ENCODE measurements at regions of chr7 and their contacts with region 1.

Region 1: GRCh38 chr7:42911454-42912447 is at the start of gene C7orf25:
- DNase-seq: peak; percentile 88 to 99
- H3K4me3 ChIP-seq: peak within 1 kb of the TSS; percentile 85
- H3K27ac ChIP-seq: peak within 1 kb of the TSS; percentile 18
- H3K4me1 ChIP-seq: peaks cover 18% of the 10 kb centered on the region
- H3K27me3 ChIP-seq: no peaks in the 10 kb centered on the region
- CTCF ChIP-seq: no peak
- total RNA-seq, gene C7orf25: 4.9 and 7.3 TPM in 2 replicates

Region 2: DNA sequence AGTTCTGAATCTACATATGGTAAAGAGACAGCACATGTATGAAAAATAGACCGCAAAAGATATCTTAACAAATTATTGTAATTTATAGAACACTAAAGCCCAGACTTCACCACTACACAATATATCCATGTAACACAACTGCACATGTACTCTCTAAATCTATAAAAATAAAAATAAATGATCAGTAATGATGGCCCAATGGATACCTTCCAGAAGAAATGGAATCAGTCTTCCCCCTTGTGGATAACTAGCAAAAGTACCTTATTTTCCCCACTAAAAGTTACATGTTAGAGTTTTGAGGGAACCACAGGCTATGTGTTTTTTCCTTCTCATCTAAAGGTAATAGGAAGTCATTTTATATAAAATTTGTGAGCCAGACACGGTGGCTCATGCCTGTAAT is 25.6 kb before region 1 on chr7:
- CTCF ChIA-PET with region 1: no interaction called
- POLR2A ChIA-PET with region 1: no interaction called
- intact Hi-C with region 1: loop called (anchors 1 kb)
- DNase-seq: no peak
- H3K4me3 ChIP-seq: no peak overlapping the region
- H3K27ac ChIP-seq: no peak overlapping the region
- H3K4me1 ChIP-seq: peaks cover 38% of the 10 kb centered on the region
- H3K27me3 ChIP-seq: no peaks in the 10 kb centered on the region
- CTCF ChIP-seq: peak; percentile 58

Region 3: DNA sequence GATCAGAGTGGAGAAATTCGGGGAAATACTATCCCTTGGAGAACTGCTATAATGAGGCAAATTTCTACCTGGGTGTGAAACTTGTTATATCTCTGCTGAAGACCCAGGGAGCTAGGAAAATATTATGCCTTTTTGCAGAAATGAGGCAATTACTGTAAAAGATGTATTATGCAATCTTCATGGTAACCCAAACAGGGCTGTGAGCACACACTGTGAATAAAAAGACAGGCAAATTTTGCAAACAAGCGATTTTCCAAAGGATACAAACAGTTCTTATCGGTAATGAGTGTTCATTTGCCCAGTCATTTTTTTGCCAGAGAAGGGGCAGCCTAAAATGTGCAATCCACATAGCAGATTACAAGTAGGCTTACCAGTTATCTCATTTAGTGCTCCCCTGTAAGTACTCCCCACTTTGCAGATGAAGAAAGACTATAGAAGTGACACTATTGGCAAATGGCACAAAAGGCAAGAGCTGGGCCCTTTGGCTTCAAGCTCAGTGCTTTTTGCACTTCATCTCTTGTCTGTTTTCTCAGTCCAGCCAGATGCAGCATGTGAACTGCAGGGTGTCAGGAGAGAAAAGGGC is 406.5 kb after region 1 on chr7:
- CTCF ChIA-PET with region 1: no interaction called
- POLR2A ChIA-PET with region 1: no interaction called
- intact Hi-C with region 1: no loop called
- DNase-seq: no peak
- H3K4me3 ChIP-seq: no peak overlapping the region
- H3K27ac ChIP-seq: no peak overlapping the region
- H3K4me1 ChIP-seq: no peaks in the 10 kb centered on the region
- H3K27me3 ChIP-seq: peaks cover 89% of the 10 kb centered on the region
- CTCF ChIP-seq: no peak

Region 4: GRCh38 chr7:43328785-43329380 is 417.1 kb after region 1 on chr7:
- CTCF ChIA-PET with region 1: interaction called, 10 read pairs
- POLR2A ChIA-PET with region 1: no interaction called
- intact Hi-C with region 1: no loop called
- DNase-seq: no peak
- H3K4me3 ChIP-seq: no peak overlapping the region
- H3K27ac ChIP-seq: no peak overlapping the region
- H3K4me1 ChIP-seq: no peaks in the 10 kb centered on the region
- H3K27me3 ChIP-seq: peaks cover 69% of the 10 kb centered on the region
- CTCF ChIP-seq: no peak

Region 5: GRCh38 chr7:43784030-43785001 is 872.6 kb after region 1 on chr7:
- CTCF ChIA-PET with region 1: no interaction called
- POLR2A ChIA-PET with region 1: no interaction called
- intact Hi-C with region 1: no loop called
- DNase-seq: no peak
- H3K4me3 ChIP-seq: no peak overlapping the region
- H3K27ac ChIP-seq: peak overlapping the region; percentile 33
- H3K4me1 ChIP-seq: peaks cover 43% of the 10 kb centered on the region
- H3K27me3 ChIP-seq: no peaks in the 10 kb centered on the region
- CTCF ChIP-seq: no peak